GM13976 (cell line): ENCODE measurements at regions of chr20 and their contacts with region 1.

Region 1: DNA sequence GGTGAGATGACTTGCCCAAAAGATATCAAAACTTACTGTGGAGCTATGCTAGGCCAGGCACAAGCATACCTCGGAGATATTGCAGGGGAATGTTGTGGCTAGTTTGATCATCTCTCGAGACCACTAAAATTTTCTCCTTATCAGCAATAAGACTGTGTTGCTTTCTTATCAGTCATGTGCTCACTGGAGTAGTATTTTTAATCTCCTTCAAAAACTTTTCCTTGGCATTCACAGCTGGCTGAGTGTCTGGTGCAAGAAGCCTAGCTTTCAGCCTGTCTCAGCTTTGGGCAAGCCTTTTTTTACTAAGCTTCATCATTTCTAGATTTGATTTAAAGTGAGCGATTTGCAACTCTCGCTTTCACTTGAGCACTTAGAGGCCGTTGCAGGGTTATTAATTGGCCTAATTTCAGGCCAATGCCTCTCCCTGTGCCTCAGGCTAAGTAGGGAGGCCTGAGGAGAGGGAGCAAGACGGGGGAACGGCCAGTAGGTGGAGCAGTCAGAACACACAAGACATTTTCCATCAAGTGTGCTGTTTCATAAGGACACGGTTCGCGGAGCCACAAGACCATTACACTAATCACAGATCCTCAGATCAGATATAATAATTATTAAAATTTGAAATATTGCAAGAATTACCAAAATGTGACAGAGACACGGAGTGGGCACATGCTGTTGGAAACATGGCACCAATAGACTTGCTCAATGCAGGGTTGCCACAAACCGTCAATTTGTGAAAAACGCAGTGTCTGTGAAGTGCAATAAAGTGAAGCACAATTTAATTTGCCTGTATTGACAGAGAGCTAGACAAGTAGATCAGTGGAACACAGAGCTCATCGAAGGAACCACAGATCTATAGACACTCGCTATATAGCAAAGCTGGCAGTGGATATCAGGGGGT is 106.8 kb upstream of the SIRPG start:
- DNase-seq: peak; percentile 64
- CTCF ChIP-seq: peak; percentile 81

Region 2: GRCh38 chr20:2172305-2173175 is 408.2 kb after region 1 on chr20:
- in situ Hi-C with region 1: loop called (anchors 25 kb)
- DNase-seq: peak; percentile 80
- CTCF ChIP-seq: peak; percentile 89